ENCODE measurements at regions of chr2 and their contacts with region 1.

Region 1: DNA sequence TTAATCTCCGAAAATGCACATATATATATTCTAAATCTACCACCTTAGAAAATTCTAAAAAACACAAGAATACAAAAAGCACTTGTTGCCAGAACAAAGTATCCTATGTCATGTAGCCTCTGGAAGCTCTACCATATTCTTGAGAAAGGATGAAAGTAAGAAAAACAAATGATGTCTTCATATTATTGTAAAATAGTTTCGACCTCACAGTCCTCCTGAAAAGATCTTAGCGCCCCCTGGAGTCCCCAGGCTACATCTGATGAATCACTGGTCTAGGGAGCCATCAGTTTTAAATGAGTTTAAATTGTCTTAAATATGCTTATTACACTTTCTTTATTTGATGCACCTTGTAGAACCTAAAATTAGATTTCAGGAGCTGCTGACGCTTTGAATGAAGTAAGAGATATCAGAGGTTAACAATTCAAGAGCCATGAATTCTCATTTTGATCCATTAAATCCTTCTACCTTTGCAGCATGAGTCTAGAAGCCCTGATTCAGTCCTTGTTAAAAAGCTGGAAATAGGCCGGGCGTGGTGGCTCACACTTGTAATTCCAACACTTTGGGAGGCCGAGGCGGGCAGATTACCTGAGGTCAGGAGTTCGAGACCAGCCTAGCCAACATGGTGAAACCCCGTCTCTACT is 138.8 kb downstream of the MCFD2 start:
- DNase-seq: peak; percentile 82
- H3K4me3 Mint-ChIP-seq: no peak overlapping the region
- H3K27ac Mint-ChIP-seq: no peak overlapping the region
- H3K4me1 Mint-ChIP-seq: no peaks in the 10 kb centered on the region
- H3K27me3 Mint-ChIP-seq: peaks cover 12% of the 10 kb centered on the region

Region 2: GRCh38 chr2:46364797-46365457 is 411.9 kb before region 1 on chr2:
- intact Hi-C with region 1: no loop called
- DNase-seq: peak; percentile 83
- H3K4me3 Mint-ChIP-seq: no peak overlapping the region
- H3K27ac Mint-ChIP-seq: no peak overlapping the region
- H3K4me1 Mint-ChIP-seq: peaks cover 36% of the 10 kb centered on the region
- H3K27me3 Mint-ChIP-seq: peaks cover 6% of the 10 kb centered on the region

Region 3: DNA sequence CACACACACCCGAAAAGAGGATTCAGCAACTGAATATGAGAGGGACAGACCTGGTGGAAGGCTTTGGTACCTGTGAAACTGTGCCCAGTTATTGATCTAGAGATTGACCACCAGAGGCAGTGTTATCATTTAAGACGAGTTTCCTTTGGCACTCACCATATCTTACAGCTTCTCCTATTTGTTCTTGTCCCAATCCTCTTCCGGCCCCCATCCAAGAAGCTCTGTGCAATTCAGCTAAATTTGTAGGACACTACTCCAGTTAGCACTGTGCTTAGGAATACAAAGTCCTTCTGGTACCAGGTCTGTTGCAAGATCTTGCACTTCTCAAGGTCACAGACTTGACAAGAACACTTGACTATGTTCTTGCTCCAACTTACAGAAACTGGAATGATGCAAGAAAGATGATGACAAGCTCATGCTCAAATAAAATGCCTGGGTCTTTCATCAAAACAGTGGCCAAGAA is 119.7 kb before region 1 on chr2:
- intact Hi-C with region 1: loop called (anchors 2 kb)
- DNase-seq: no peak
- H3K4me3 Mint-ChIP-seq: no peak overlapping the region
- H3K27ac Mint-ChIP-seq: no peak overlapping the region
- H3K4me1 Mint-ChIP-seq: no peaks in the 10 kb centered on the region
- H3K27me3 Mint-ChIP-seq: peaks cover 26% of the 10 kb centered on the region

Measured in activated CD4-positive, alpha-beta T cell treated with anti-CD3 and anti-CD28 coated beads, Interleukin-2, amount 10 ng/mL, durations not matched to agents 24 days and 14 days (primary cell).